PC-9 (cell line): ENCODE measurements at regions of chr7 and their contacts with region 1.

Region 1: DNA sequence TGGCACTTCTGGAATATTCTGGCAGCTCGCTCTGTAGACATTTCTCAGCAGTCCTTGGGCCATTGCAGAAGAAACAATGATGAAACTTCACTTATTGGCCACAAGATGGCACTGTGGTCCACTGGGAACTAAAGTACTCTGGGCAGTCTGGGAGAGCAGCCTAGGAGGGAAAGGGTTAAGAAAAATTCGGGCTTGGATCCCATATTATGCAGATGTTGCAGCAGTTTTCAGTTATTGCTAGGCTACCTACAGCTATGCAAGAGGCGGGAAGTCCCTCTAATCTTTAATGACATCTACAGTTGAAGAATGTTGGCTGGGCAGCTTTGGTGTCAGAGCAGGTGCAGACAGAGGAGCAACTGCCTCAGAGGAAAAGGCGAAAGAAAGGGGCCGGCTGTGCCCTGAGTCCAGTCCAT is 201.7 kb upstream of the PRSS58 start:
- DNase-seq: peak; percentile 82 to 96
- H3K4me3 ChIP-seq: no peak overlapping the region
- H3K27ac ChIP-seq: peak overlapping the region; percentile 45
- H3K4me1 ChIP-seq: peaks cover 26% of the 10 kb centered on the region
- H3K27me3 ChIP-seq: no peaks in the 10 kb centered on the region
- CTCF ChIP-seq: peak; percentile 91

Region 2: DNA sequence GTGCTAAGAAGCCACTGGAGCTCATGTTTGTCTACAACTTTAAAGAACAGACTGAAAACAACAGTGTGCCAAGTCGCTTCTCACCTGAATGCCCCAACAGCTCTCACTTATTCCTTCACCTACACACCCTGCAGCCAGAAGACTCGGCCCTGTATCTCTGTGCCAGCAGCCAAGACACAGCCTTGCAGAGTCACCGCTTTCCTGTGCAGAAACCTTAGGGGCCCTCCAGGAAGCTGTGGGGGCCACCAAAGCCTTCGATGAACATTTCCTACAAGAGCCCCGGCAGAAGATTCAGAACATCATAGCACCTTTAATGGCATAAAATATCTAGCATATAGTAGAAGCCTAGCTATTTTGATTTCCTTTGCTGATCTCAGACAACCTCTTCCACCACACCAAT is 113.7 kb before region 1 on chr7:
- CTCF ChIA-PET with region 1: no interaction called
- POLR2A ChIA-PET with region 1: no interaction called
- intact Hi-C with region 1: no loop called
- DNase-seq: no peak
- H3K4me3 ChIP-seq: no peak overlapping the region
- H3K27ac ChIP-seq: no peak overlapping the region
- H3K4me1 ChIP-seq: no peaks in the 10 kb centered on the region
- H3K27me3 ChIP-seq: no peaks in the 10 kb centered on the region
- CTCF ChIP-seq: no peak

Region 3: GRCh38 chr7:142357953-142358520 is 101.5 kb before region 1 on chr7:
- CTCF ChIA-PET with region 1: interaction called, 3 read pairs
- POLR2A ChIA-PET with region 1: no interaction called
- intact Hi-C with region 1: loop called (anchors 1 kb)
- DNase-seq: peak; percentile 71 to 75
- H3K4me3 ChIP-seq: peak overlapping the region; percentile 27; the same call in 1 of the 2 replicates
- H3K27ac ChIP-seq: peak overlapping the region; percentile 0; the same call in 1 of the 2 replicates
- H3K4me1 ChIP-seq: peaks cover 28% of the 10 kb centered on the region
- H3K27me3 ChIP-seq: no peaks in the 10 kb centered on the region
- CTCF ChIP-seq: peak; percentile 98

Region 4: GRCh38 chr7:142420559-142421362 is 38.8 kb before region 1 on chr7:
- CTCF ChIA-PET with region 1: interaction called, 11 read pairs
- POLR2A ChIA-PET with region 1: no interaction called
- intact Hi-C with region 1: loop called (anchors 1 kb)
- DNase-seq: peak; percentile 74 to 79
- H3K4me3 ChIP-seq: no peak overlapping the region
- H3K27ac ChIP-seq: 0 out of 2 replicates have a peak overlapping the region, but pooled peaks have one; percentile 22
- H3K4me1 ChIP-seq: peaks cover 9% of the 10 kb centered on the region
- H3K27me3 ChIP-seq: no peaks in the 10 kb centered on the region
- CTCF ChIP-seq: peak; percentile 59; the same call in 1 of the 2 replicates

Region 5: GRCh38 chr7:142508258-142508689 is 48.7 kb after region 1 on chr7:
- CTCF ChIA-PET with region 1: interaction called, 7 read pairs
- POLR2A ChIA-PET with region 1: interaction called, 7 read pairs
- intact Hi-C with region 1: loop called (anchors 1 kb)
- DNase-seq: peak; percentile 78 to 99
- H3K4me3 ChIP-seq: no peak overlapping the region; the same call in 1 of the 2 replicates
- H3K27ac ChIP-seq: peak overlapping the region; percentile 90
- H3K4me1 ChIP-seq: peaks cover 29% of the 10 kb centered on the region
- H3K27me3 ChIP-seq: no peaks in the 10 kb centered on the region
- CTCF ChIP-seq: no peak

Region 6: DNA sequence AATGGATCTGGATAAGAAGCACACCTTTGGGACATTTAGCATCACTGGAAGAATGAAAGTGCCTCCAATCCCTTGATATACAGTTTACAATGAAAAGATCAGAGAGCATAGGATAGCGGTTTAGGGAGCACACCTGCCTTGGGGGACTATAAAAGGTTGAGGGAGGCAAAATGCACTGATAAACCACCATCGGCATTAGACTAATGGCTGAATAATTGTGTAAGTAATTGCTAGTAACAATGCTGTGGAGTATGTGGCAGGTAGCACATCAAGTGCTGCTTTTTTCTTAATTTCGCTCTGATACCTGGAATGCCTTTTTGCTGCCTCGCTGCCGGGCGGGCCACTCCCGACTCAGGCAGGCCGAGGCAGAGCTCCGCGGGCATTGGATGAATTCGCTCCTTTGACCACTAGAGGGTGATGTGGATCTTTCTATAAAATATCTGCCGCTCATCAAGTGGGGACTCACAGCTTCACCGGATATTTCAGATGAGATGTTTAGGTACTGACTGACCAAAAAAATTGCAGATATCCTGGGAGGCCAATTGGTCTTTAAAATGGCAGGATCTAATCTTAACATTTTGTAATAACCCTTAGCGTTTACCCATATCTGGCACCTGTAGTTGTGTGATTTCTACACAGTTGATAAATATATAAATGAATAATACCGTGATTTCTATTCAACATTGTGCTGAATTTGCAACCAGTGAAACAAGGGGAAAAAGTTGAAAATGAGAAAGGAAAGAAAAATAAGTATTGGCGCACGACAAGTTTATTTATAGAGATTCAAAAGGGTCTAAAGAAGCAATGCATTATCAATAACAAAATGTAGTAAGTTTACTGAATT is 173.0 kb after region 1 on chr7:
- CTCF ChIA-PET with region 1: no interaction called
- POLR2A ChIA-PET with region 1: no interaction called
- intact Hi-C with region 1: loop called (anchors 1 kb)
- DNase-seq: peak; percentile 70 to 72
- H3K4me3 ChIP-seq: no peak overlapping the region
- H3K27ac ChIP-seq: no peak overlapping the region
- H3K4me1 ChIP-seq: no peaks in the 10 kb centered on the region
- H3K27me3 ChIP-seq: no peaks in the 10 kb centered on the region
- CTCF ChIP-seq: peak; percentile 93

Region 7: GRCh38 chr7:142983825-142984224 is 524.3 kb after region 1 on chr7:
- CTCF ChIA-PET with region 1: no interaction called
- POLR2A ChIA-PET with region 1: no interaction called
- intact Hi-C with region 1: no loop called
- DNase-seq: no peak
- H3K4me3 ChIP-seq: no peak overlapping the region
- H3K27ac ChIP-seq: no peak overlapping the region
- H3K4me1 ChIP-seq: no peaks in the 10 kb centered on the region
- H3K27me3 ChIP-seq: no peaks in the 10 kb centered on the region
- CTCF ChIP-seq: no peak